Activated CD4-positive, alpha-beta T cell treated with anti-CD3 and anti-CD28 coated beads, Interleukin-2, amount 10 ng/mL, durations not matched to agents 24 days and 14 days (primary cell): ENCODE measurements at regions of chr21 and their contacts with region 1.

Region 1: GRCh38 chr21:14737922-14738321 is 191.8 kb upstream of the SAMSN1 start:
- DNase-seq: peak; percentile 87
- H3K4me3 Mint-ChIP-seq: no peak overlapping the region
- H3K27ac Mint-ChIP-seq: no peak overlapping the region
- H3K4me1 Mint-ChIP-seq: peaks cover 37% of the 10 kb centered on the region
- H3K27me3 Mint-ChIP-seq: no peaks in the 10 kb centered on the region

Region 2: DNA sequence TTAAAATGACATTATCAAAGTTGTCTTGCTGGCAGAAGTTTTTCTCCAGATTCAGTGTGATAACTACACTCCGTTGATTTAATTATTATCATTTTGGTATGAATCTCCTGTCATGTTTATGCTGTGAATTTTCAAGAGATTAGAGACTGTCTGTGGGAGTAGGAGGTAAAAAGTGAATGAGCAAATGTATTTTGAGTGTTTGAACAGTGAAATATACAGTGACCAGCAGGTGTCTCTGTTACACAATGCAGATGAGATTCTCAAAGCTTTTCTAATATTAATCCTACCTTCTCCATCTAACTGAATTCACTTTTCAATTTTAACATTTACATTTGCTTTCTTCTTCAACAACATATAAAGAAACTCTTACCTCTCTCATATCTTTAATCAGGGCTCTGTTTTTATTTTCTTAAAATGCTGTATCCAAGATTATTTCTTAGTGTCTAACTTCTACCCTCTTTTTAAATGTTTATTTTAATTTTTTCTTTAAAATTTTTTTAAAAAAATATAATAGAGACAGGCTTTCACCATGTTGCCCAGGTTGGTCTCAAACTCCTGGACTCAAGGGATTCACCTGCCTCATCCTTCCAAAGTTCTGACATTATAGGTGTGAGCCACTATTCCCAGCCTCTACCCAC is 334.1 kb before region 1 on chr21:
- intact Hi-C with region 1: loop called (anchors 10 kb)
- DNase-seq: peak; percentile 63
- H3K4me3 Mint-ChIP-seq: no peak overlapping the region
- H3K27ac Mint-ChIP-seq: no peak overlapping the region
- H3K4me1 Mint-ChIP-seq: peaks cover 5% of the 10 kb centered on the region
- H3K27me3 Mint-ChIP-seq: peaks cover 4% of the 10 kb centered on the region

Region 3: GRCh38 chr21:14454016-14455009 is 283.6 kb before region 1 on chr21:
- intact Hi-C with region 1: loop called (anchors 2 kb)
- DNase-seq: peak; percentile 61
- H3K4me3 Mint-ChIP-seq: peak overlapping the region; percentile 40
- H3K27ac Mint-ChIP-seq: peak overlapping the region; percentile 87
- H3K4me1 Mint-ChIP-seq: peaks cover 52% of the 10 kb centered on the region
- H3K27me3 Mint-ChIP-seq: no peaks in the 10 kb centered on the region

Region 4: DNA sequence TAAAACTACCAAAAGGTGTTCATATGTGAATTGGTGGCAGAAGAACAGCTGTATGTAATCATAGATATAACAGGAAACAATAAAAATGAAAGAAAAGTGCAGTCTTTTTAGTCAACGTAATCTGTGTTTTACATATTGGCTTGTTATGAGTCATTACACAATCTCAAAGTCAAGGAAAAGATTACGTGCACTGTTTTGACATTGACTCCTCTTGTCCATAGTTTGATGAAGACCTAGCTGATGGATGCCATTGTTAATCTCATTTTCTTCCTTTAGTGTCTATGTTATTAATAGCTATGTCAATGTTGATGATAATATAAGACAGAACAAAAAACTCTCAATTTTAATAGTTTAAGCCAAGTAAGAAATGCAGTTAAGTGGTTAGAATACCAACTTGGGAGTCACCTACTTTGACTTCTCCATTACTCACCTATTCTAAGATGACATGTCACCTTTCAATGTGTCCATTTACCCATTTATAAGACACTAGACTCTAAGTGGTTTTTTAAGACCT is 107.3 kb before region 1 on chr21:
- intact Hi-C with region 1: loop called (anchors 2 kb)
- DNase-seq: no peak
- H3K4me3 Mint-ChIP-seq: no peak overlapping the region
- H3K27ac Mint-ChIP-seq: peak overlapping the region; percentile 78
- H3K4me1 Mint-ChIP-seq: peaks cover 24% of the 10 kb centered on the region
- H3K27me3 Mint-ChIP-seq: no peaks in the 10 kb centered on the region

Region 5: GRCh38 chr21:14675774-14676530 is 62.0 kb before region 1 on chr21:
- intact Hi-C with region 1: loop called (anchors 5 kb)
- DNase-seq: peak; percentile 75
- H3K4me3 Mint-ChIP-seq: peak overlapping the region; percentile 74
- H3K27ac Mint-ChIP-seq: peak overlapping the region; percentile 93
- H3K4me1 Mint-ChIP-seq: peaks cover 38% of the 10 kb centered on the region
- H3K27me3 Mint-ChIP-seq: no peaks in the 10 kb centered on the region

Region 6: DNA sequence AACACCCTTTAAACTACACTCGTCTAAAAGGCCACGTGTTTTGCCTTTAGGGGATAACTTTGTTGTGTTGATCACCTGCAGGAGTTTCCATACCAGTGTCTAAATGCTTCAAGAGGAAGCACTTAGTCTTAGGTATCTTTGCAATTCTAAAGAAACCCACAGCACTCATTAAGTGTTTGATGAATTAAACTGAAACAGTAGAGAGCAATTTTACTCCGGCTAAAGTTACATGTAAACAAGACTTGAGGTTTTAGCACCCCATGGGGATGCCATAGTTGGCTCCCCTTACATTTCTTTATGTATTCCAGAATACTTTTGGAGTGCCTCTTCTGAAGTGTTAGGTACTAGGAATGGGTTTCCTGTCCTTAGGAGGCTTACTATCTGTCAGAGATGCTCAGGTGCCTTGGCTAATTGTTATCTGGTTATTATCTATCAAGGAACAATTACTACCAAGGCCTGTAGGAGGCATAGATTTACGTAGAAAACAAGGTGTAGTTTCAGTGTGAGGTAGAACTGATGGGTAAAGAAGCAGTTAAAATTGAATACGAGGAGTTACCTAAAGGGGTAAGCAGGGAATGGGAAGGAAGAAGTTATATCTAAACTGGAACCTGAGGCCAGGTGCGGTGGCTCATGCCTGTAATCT is 15.0 kb before region 1 on chr21:
- intact Hi-C with region 1: loop called (anchors 2 kb)
- DNase-seq: no peak
- H3K4me3 Mint-ChIP-seq: no peak overlapping the region
- H3K27ac Mint-ChIP-seq: peak overlapping the region; percentile 67
- H3K4me1 Mint-ChIP-seq: peaks cover 20% of the 10 kb centered on the region
- H3K27me3 Mint-ChIP-seq: no peaks in the 10 kb centered on the region

Region 7: DNA sequence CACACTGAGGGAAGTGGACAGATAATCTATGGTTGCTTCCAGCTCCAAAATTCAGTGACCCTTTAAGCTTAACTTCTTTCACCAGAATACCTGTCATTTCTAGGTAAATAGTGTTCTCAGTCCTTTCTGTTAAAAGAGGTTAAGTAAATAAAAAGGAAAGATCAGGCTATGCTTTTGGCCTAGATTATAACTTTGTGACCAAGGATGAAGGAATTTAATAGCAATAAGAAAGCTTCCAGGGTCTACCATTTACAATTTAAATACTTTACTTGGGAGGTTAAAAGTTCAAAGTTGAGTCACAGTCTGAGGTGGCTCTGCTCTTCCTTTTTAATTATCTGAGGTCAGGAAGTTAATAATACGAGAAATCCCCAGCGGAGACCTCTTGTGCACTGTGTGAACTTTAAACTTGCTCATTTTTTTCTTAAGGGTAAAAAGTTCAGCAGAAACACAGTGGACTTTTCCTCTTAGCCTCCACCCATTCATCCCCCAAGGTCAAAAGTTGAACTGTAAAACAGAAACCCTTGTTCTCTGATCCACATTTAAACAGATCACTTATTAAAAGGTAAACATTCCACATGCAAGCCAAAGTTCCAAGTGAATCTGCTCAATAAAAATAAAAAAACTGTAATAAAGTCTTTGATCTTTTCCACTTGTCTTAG is 139.8 kb after region 1 on chr21:
- intact Hi-C with region 1: no loop called
- DNase-seq: no peak
- H3K4me3 Mint-ChIP-seq: no peak overlapping the region
- H3K27ac Mint-ChIP-seq: no peak overlapping the region
- H3K4me1 Mint-ChIP-seq: peaks cover 2% of the 10 kb centered on the region
- H3K27me3 Mint-ChIP-seq: no peaks in the 10 kb centered on the region